Activated CD8-positive, alpha-beta T cell treated with anti-CD3 and anti-CD28 coated beads, Interleukin-2, amount 10 ng/mL, durations not matched to agents 7 days and 5 days (primary cell): ENCODE measurements at regions of chr10 and their contacts with region 1.

Region 1: GRCh38 chr10:79195091-79195923 is 126.5 kb downstream of the ZMIZ1 start:
- DNase-seq: peak; percentile 85
- ATAC-seq: peak; percentile 91
- H3K4me3 Mint-ChIP-seq: no peak overlapping the region
- H3K27ac Mint-ChIP-seq: no peak overlapping the region
- H3K4me1 Mint-ChIP-seq: no peaks in the 10 kb centered on the region
- H3K27me3 Mint-ChIP-seq: no peaks in the 10 kb centered on the region

Region 2: DNA sequence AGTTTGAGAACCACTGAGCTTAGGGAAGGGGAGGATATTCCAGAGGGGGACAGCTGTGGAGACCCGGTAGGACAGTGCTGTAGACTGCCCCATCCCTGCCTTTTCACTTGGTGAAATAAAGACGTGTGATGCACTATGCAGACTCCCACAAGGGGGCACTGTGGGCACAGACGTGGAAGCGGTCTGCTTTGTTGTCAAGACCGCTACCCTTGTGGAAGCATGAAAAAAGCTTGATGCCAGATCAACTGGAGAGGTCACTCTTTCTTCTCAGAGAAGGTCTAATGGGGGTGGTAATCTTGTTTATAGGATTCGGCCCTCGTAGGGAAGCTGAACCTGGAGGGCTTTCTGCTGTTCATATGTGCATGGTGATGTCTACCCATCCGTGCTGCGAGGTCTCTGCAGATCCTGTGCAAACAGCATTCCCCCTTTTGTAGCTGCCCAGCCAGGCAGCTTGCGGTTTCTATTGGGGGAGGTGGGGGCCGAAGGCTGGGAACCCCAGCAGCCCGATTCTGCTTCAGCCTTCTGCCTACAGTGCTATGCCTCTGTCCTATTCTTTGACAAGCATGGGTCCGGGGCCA is 1147.9 kb before region 1 on chr10:
- CTCF ChIA-PET with region 1: interaction called, 29 read pairs
- POLR2A ChIA-PET with region 1: no interaction called
- DNase-seq: peak; percentile 91
- ATAC-seq: peak; percentile 89
- H3K4me3 Mint-ChIP-seq: no peak overlapping the region
- H3K27ac Mint-ChIP-seq: peak overlapping the region; percentile 26
- H3K4me1 Mint-ChIP-seq: peaks cover 30% of the 10 kb centered on the region
- H3K27me3 Mint-ChIP-seq: no peaks in the 10 kb centered on the region

Region 3: GRCh38 chr10:78664929-78665553 is 530.3 kb before region 1 on chr10:
- CTCF ChIA-PET with region 1: interaction called, 22 read pairs
- POLR2A ChIA-PET with region 1: no interaction called
- DNase-seq: peak; percentile 46
- ATAC-seq: no peak
- H3K4me3 Mint-ChIP-seq: no peak overlapping the region
- H3K27ac Mint-ChIP-seq: no peak overlapping the region
- H3K4me1 Mint-ChIP-seq: no peaks in the 10 kb centered on the region
- H3K27me3 Mint-ChIP-seq: peaks cover 29% of the 10 kb centered on the region

Region 4: GRCh38 chr10:78964952-78965633 is 230.2 kb before region 1 on chr10:
- CTCF ChIA-PET with region 1: interaction called, 12 read pairs
- POLR2A ChIA-PET with region 1: interaction called, 3 read pairs
- DNase-seq: no peak
- ATAC-seq: no peak
- H3K4me3 Mint-ChIP-seq: no peak overlapping the region
- H3K27ac Mint-ChIP-seq: no peak overlapping the region
- H3K4me1 Mint-ChIP-seq: no peaks in the 10 kb centered on the region
- H3K27me3 Mint-ChIP-seq: no peaks in the 10 kb centered on the region

Region 5: GRCh38 chr10:79105150-79105739 is 90.1 kb before region 1 on chr10:
- CTCF ChIA-PET with region 1: interaction called, 13 read pairs
- POLR2A ChIA-PET with region 1: no interaction called
- DNase-seq: no peak
- ATAC-seq: no peak
- H3K4me3 Mint-ChIP-seq: no peak overlapping the region
- H3K27ac Mint-ChIP-seq: no peak overlapping the region
- H3K4me1 Mint-ChIP-seq: peaks cover 24% of the 10 kb centered on the region
- H3K27me3 Mint-ChIP-seq: no peaks in the 10 kb centered on the region

Region 6: DNA sequence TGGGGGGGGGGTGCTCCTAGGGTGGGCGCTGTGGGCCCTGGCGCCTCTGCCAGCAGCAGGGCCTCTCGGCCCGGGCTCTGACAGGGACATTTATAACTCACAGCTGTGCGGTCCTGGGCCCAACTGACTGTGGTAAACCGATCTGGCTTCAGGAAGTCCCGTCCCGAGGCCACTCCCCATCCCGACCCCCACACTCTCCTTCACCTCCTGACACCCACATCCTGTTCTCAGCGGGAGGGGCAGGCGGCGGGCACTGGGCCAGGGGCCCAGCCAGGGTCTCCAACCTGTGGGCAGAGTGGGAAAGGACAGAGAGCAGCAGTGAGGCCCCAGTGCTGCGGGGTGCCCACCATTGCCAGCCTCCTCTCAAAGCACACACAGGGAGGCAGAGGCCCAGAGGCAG is 57.5 kb before region 1 on chr10:
- CTCF ChIA-PET with region 1: interaction called, 11 read pairs
- POLR2A ChIA-PET with region 1: no interaction called
- DNase-seq: peak; percentile 83
- ATAC-seq: peak; percentile 84
- H3K4me3 Mint-ChIP-seq: peak overlapping the region; percentile 80
- H3K27ac Mint-ChIP-seq: peak overlapping the region; percentile 93
- H3K4me1 Mint-ChIP-seq: peaks cover 66% of the 10 kb centered on the region
- H3K27me3 Mint-ChIP-seq: no peaks in the 10 kb centered on the region

Region 7: GRCh38 chr10:79159141-79159651 is 36.1 kb before region 1 on chr10:
- CTCF ChIA-PET with region 1: no interaction called
- POLR2A ChIA-PET with region 1: no interaction called
- DNase-seq: no peak
- ATAC-seq: no peak
- H3K4me3 Mint-ChIP-seq: no peak overlapping the region
- H3K27ac Mint-ChIP-seq: no peak overlapping the region
- H3K4me1 Mint-ChIP-seq: no peaks in the 10 kb centered on the region
- H3K27me3 Mint-ChIP-seq: no peaks in the 10 kb centered on the region

Region 8: DNA sequence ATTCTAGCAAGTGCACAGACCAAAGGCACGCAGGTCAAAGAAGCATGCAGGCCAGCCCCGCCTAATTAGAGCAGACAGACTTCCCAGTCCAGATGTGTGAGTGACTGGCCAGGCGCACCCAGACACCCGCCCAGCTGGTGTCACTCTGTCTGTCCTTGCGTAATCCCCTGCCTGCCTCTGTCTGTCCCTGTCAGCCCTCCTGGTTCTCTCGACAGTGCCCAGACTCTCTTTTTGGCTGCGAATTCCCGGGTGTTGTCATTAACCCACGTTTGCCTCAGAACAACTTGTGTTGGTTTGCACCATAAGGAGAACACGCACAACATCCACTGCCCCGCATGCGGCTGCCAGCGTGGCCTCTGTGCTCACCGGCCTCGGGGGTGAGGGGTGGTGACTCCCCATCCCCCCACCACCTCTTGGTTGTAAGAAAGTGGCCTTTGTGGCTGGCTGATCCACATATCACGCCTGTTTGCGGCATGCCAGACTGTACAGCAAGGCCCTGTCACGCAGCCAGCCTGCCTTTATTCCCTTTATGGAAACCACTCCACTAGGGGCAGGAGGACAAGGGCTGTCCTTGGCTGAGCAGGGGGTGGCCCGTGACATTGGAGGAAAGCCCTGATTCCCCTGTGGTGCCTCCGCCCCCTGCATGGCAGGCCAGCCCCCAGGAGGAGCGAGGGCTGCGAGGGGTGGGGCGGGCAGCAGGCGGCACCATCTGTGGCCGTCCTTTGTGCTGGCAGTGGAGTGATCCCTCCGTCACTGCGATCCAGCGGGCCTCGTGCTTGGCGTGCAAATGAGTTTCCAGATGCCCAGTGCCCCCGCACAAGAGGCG is 79.2 kb after region 1 on chr10:
- CTCF ChIA-PET with region 1: no interaction called
- POLR2A ChIA-PET with region 1: no interaction called
- DNase-seq: no peak
- ATAC-seq: no peak
- H3K4me3 Mint-ChIP-seq: no peak overlapping the region
- H3K27ac Mint-ChIP-seq: no peak overlapping the region
- H3K4me1 Mint-ChIP-seq: peaks cover 3% of the 10 kb centered on the region
- H3K27me3 Mint-ChIP-seq: no peaks in the 10 kb centered on the region